K562 (cell line): ENCODE measurements at regions of chr3 and their contacts with region 1.

Region 1: DNA sequence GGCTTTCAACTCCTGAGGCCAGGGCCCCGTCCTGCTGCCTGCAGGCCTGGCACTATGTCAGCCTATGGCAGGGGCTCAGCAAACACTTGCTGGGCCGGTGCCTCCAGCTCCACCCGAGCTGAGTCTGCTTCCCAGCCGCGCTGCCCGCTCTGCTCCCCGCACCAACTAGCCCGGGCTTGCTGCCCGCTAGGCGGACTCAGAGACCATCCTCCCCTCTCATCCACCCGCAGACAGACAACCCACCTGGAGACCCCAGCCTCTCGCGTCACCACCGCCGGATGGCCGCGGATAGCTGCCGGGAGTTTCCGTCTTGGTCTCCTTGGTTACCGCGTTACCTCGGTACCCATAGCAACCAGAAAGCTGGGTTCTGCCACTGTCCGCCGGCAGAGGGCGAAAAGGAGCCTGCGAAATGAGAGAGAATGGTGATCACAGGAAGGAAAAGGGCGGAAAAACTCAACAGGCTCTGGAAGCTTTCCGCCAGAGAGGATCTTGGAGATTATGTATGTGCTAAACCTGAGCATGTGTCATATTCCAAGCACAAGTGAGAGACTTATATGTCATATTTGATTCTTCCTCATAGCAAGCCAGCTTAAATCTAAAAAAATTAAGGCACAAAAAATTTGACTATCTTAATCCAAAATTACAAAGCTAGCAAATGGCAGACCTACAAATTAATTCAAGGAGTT is at the start of gene ZBBX:
- DNase-seq: peak; percentile 33 to 71 (median 62)
- ATAC-seq: peak; percentile 97
- H3K4me3 ChIP-seq: no peak within 1 kb of the TSS
- H3K27ac ChIP-seq: no peak within 1 kb of the TSS
- H3K4me1 ChIP-seq: peaks cover 0 to 4% of the 10 kb centered on the region in 2 experiments; a peak in 1 of 5 replicates
- H3K27me3 ChIP-seq: no peaks in the 10 kb centered on the region
- CTCF ChIP-seq: peak; percentile 65 to 79 (median 71)
- EP300 ChIP-seq: no peak
- POLR2A ChIP-seq: no peak
- RAD21 ChIP-seq: peak; percentile 65 to 69
- polyA plus RNA-seq, gene ZBBX: not detected

Region 2: DNA sequence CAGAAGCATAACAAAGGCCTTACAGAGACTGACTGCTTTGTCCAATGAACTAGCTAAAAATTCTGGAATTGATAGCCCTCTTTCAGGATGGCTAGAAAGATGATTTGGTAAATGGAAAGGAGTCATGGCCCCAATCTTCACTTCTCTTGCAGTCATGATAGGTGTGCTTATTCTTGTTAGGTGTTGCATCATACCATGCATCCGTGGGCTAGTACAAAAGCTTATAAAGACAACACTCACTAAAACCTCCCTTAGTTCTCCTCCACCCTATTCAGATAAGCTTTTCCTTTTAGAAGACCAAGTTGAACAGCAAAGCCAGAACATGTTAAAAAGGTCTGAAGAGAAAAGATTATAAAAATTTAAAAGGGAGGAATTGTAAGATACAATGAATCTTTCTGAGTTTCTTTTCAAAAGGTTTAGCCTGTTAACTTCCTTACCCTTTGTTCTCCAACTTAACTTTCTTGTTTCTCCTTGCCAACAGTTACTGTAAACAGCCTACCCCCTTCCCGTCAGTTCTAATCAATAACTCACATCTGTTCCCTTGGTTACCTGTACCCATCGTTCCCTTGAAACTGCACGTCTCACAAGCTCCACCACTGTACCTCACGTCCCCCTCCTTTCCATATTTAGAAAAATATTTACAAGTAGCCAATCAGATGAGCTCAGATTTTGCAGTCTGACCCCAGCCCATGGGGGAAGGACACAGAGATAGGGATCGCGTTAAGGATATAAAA is 105.8 kb before region 1 on chr3:
- CTCF ChIA-PET with region 1: no interaction called
- POLR2A ChIA-PET with region 1: no interaction called
- in situ Hi-C with region 1: no loop called
- intact Hi-C with region 1: no loop called
- DNase-seq: no peak
- ATAC-seq: no peak
- H3K4me3 ChIP-seq: no peak overlapping the region
- H3K27ac ChIP-seq: no peak overlapping the region
- H3K4me1 ChIP-seq: no peaks in the 10 kb centered on the region
- H3K27me3 ChIP-seq: no peaks in the 10 kb centered on the region
- CTCF ChIP-seq: no peak
- EP300 ChIP-seq: no peak
- POLR2A ChIP-seq: no peak
- RAD21 ChIP-seq: no peak

Region 3: GRCh38 chr3:167437428-167438139 is 57.4 kb after region 1 on chr3:
- CTCF ChIA-PET with region 1: no interaction called
- POLR2A ChIA-PET with region 1: no interaction called
- in situ Hi-C with region 1: no loop called
- intact Hi-C with region 1: no loop called
- DNase-seq: no peak
- ATAC-seq: no peak
- H3K4me3 ChIP-seq: no peak overlapping the region
- H3K27ac ChIP-seq: no peak overlapping the region
- H3K4me1 ChIP-seq: no peaks in the 10 kb centered on the region
- H3K27me3 ChIP-seq: no peaks in the 10 kb centered on the region
- CTCF ChIP-seq: no peak
- EP300 ChIP-seq: no peak
- POLR2A ChIP-seq: no peak
- RAD21 ChIP-seq: no peak

Region 4: DNA sequence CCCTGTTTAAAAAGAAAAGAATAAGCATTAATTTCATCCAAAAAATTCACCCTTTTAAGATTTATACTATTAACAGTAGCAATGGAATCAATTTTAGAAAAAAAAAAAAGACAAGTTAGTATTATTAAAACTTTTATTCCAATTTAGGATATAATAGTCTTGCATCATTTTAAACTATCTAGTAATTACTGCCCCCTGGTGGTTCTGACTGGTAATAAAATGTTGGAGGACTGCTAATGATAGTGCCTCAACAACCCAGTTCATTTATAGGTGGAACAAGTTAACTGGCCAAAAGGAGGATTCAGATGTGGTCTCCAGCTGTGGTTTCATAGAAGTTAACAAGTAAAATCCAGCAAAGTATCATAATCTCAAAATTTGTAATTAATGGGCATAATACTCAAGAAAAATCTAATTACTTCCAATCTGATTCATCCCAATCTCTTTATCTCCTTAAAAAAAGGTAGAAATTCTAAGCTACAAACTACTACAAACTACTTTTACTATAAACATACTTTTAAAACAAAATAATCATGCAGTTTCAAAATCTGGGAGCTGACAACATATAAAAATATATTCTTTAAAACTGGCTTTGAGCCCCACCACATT is 304.3 kb after region 1 on chr3:
- CTCF ChIA-PET with region 1: no interaction called
- POLR2A ChIA-PET with region 1: no interaction called
- in situ Hi-C with region 1: no loop called
- intact Hi-C with region 1: loop called (anchors 10 kb)
- DNase-seq: peak; percentile 39 to 78 (median 44)
- ATAC-seq: peak; percentile 79
- H3K4me3 ChIP-seq: no peak overlapping the region
- H3K27ac ChIP-seq: no peak overlapping the region
- H3K4me1 ChIP-seq: no peaks in the 10 kb centered on the region
- H3K27me3 ChIP-seq: no peaks in the 10 kb centered on the region
- CTCF ChIP-seq: peak; percentile 39 to 58 (median 50); a peak in 4 of 6 replicates
- EP300 ChIP-seq: no peak
- POLR2A ChIP-seq: no peak
- RAD21 ChIP-seq: peak; percentile 42 to 45

Region 5: DNA sequence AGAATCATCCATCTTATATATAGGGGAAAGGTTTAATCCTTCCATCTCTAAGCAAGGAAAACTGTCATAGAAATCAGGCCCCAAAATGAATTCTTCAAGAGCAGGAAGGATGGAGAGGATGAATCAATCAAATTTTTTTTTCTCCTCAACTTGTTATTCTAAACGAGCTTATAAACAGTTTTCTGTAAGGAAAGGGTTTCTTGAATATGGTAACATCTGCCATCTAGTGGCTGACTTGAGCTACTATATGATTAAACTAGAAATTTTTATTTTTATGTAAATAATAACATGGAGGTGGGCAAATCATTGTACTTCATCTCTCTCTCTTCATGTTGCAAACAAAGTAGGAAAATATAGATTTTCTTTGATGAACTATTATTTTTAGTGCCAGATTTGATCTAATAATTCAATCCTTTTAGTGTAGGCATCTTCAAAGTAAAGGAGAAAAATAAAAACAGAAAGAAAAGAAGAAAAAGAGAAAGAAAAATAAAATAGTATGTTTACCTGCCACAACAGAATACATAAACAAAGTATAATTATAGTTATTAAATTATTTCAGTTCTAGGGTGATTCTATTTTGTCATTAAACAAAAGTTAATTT is 502.0 kb after region 1 on chr3:
- CTCF ChIA-PET with region 1: no interaction called
- POLR2A ChIA-PET with region 1: no interaction called
- in situ Hi-C with region 1: no loop called
- intact Hi-C with region 1: loop called (anchors 1 kb)
- DNase-seq: peak; percentile 20 to 51 (median 34)
- ATAC-seq: peak; percentile 80
- H3K4me3 ChIP-seq: no peak overlapping the region
- H3K27ac ChIP-seq: no peak overlapping the region
- H3K4me1 ChIP-seq: no peaks in the 10 kb centered on the region
- H3K27me3 ChIP-seq: no peaks in the 10 kb centered on the region
- CTCF ChIP-seq: peak; percentile 34 to 68 (median 34); a peak in 3 of 6 replicates
- EP300 ChIP-seq: no peak
- POLR2A ChIP-seq: no peak
- RAD21 ChIP-seq: peak; percentile 77 to 83